Stomach (tissue), 19 donors: ENCODE measurements at regions of chr20 and their contacts with region 1.

Region 1: GRCh38 chr20:24142980-24143379 is 154.4 kb upstream of the GGTLC1 start:
- DNase-seq: no peak
- H3K4me3 ChIP-seq: no peak overlapping the region
- H3K27ac ChIP-seq: no peak overlapping the region
- H3K4me1 ChIP-seq: no peaks in the 10 kb centered on the region
- H3K27me3 ChIP-seq: no peaks in the 10 kb centered on the region
- CTCF ChIP-seq: no peak
- EP300 ChIP-seq: no peak
- POLR2A ChIP-seq: no peak

Region 2: GRCh38 chr20:24098886-24099285 is 44.1 kb before region 1 on chr20:
- intact Hi-C with region 1: loop called (anchors 5 kb)
- DNase-seq: no peak
- H3K4me3 ChIP-seq: no peak overlapping the region
- H3K27ac ChIP-seq: no peak overlapping the region
- H3K4me1 ChIP-seq: no peaks in the 10 kb centered on the region
- H3K27me3 ChIP-seq: peaks cover 0 to 13% (median 0%) of the 10 kb centered on the region in 3 donors
- CTCF ChIP-seq: no peak
- EP300 ChIP-seq: no peak
- POLR2A ChIP-seq: no peak